ENCODE measurements at regions of chr12 and their contacts with region 1.

Region 1: GRCh38 chr12:127108360-127109215 is 1158.4 kb upstream of the TMEM132C start:
- DNase-seq: peak; percentile 65 to 80 (median 72)
- ATAC-seq: peak; percentile 98
- H3K4me3 ChIP-seq: no peak overlapping the region
- H3K27ac ChIP-seq: no peak overlapping the region
- H3K4me1 ChIP-seq: peaks cover 0 to 4% of the 10 kb centered on the region in 2 experiments; a peak in 3 of 5 replicates
- H3K27me3 ChIP-seq: no peaks in the 10 kb centered on the region
- CTCF ChIP-seq: peak; percentile 73 to 77 (median 76)
- EP300 ChIP-seq: no peak
- POLR2A ChIP-seq: no peak
- RAD21 ChIP-seq: peak; percentile 62 to 83

Region 2: GRCh38 chr12:127025545-127025944 is 83.0 kb before region 1 on chr12:
- CTCF ChIA-PET with region 1: no interaction called
- POLR2A ChIA-PET with region 1: no interaction called
- in situ Hi-C with region 1: no loop called
- intact Hi-C with region 1: loop called (anchors 10 kb)
- DNase-seq: peak in 3 of 4 experiments; percentile 11 to 18 (median 12)
- ATAC-seq: peak; percentile 76
- H3K4me3 ChIP-seq: no peak overlapping the region
- H3K27ac ChIP-seq: no peak overlapping the region
- H3K4me1 ChIP-seq: no peaks in the 10 kb centered on the region; a peak in 1 of 5 replicates
- H3K27me3 ChIP-seq: no peaks in the 10 kb centered on the region
- CTCF ChIP-seq: peak; percentile 26 to 53 (median 28); a peak in 3 of 6 replicates
- EP300 ChIP-seq: no peak
- POLR2A ChIP-seq: no peak
- RAD21 ChIP-seq: peak; percentile 15 to 64; a peak in 3 of 4 replicates

Region 3: DNA sequence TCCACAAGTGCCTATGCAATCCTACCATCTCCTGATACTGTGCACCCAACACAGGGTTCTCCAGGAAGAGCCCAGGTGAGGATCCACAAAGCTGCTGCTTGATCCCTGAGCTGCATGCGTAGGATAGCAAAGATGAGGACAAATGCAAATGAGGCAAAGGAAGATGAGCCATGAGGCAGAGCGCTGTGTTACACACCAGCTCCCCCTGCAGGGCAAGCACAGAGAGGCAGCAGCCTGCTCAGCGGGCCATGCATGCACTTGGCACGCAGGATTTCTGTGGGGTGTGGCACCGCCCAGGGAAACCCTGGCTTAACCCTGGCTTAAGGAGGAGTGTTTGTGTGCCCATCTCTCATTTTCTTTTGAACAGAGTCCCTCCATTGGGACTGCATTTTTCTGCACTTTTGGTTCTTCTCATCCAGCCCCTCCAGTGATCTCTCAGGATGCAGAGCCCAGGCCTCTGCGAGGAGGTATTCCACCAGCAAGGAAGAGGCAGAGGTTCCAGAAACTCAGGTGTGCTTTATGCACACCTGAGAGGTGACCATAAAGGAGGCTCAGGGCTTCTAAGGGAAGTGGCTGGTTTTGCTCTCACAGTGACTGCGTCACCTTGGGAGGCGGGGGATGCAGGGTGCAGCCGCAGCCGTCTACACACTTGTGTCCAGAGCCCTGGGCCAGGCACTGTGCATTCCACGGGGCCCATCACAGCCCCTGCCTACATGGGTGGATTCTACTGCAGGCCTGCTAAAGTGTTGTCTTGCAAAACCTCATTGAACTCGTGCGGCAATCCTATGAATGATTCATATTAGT is 185.1 kb after region 1 on chr12:
- CTCF ChIA-PET with region 1: interaction called, 6 read pairs
- POLR2A ChIA-PET with region 1: no interaction called
- in situ Hi-C with region 1: loop called (anchors 5 kb)
- intact Hi-C with region 1: loop called (anchors 1 kb)
- DNase-seq: peak; percentile 62 to 79 (median 65)
- ATAC-seq: peak; percentile 97
- H3K4me3 ChIP-seq: no peak overlapping the region
- H3K27ac ChIP-seq: no peak overlapping the region
- H3K4me1 ChIP-seq: peaks cover 3 to 12% of the 10 kb centered on the region in 2 experiments; a peak in 3 of 5 replicates
- H3K27me3 ChIP-seq: peaks cover 6 to 13% of the 10 kb centered on the region in 2 experiments; a peak in 3 of 5 replicates
- CTCF ChIP-seq: peak; percentile 90 to 97 (median 91)
- EP300 ChIP-seq: no peak
- POLR2A ChIP-seq: no peak
- RAD21 ChIP-seq: peak; percentile 69 to 91

Region 4: DNA sequence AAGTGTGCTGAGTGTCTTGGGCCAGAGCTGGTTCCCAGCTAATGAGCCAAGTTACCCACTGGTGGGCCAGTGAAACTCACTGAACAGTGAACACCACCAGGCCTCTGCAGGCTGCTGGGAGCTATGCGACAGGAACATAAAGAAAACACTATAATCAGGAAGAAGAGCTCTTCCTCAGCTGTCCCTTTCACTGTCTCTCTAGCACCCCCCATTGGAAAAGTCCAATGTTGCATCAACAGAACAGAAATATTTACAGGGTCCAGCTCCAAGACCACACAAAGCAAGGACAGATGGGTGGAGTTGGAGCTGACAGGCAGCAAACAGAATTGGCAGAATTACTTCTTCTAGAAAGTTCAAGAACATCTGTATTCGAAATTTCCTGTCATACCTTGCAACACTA is 254.8 kb after region 1 on chr12:
- CTCF ChIA-PET with region 1: interaction called, 3 read pairs
- POLR2A ChIA-PET with region 1: no interaction called
- in situ Hi-C with region 1: no loop called
- intact Hi-C with region 1: loop called (anchors 2 kb)
- DNase-seq: peak in 2 of 4 experiments; percentile 20 to 47
- ATAC-seq: peak; percentile 87
- H3K4me3 ChIP-seq: no peak overlapping the region
- H3K27ac ChIP-seq: no peak overlapping the region
- H3K4me1 ChIP-seq: no peaks in the 10 kb centered on the region
- H3K27me3 ChIP-seq: no peaks in the 10 kb centered on the region
- CTCF ChIP-seq: peak; percentile 58 to 70 (median 65)
- EP300 ChIP-seq: no peak
- POLR2A ChIP-seq: no peak
- RAD21 ChIP-seq: peak; percentile 9 to 53; a peak in 2 of 4 replicates

Region 5: DNA sequence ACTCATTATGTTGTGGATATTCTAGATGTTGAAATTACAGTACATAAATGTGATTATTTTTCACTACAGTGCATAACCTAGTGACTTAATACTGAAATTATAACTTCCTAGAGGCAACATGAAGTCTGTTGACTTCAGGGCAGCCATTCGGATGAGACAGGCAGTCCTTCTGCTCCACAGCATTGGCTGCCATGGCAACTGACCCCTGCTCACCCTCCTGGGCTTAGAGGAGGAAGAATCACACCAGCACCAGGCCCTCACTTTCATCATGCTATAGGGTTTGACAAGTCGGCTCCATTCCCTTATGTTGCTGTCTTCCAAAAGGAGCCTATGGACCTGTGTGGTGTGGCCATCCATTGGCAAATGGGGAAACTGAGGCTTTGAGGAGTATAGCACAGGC is 924.9 kb after region 1 on chr12:
- CTCF ChIA-PET with region 1: no interaction called
- POLR2A ChIA-PET with region 1: no interaction called
- in situ Hi-C with region 1: loop called (anchors 10 kb)
- intact Hi-C with region 1: no loop called
- DNase-seq: no peak
- ATAC-seq: no peak
- H3K4me3 ChIP-seq: no peak overlapping the region
- H3K27ac ChIP-seq: no peak overlapping the region
- H3K4me1 ChIP-seq: no peaks in the 10 kb centered on the region
- H3K27me3 ChIP-seq: no peaks in the 10 kb centered on the region
- CTCF ChIP-seq: no peak
- EP300 ChIP-seq: no peak
- POLR2A ChIP-seq: no peak
- RAD21 ChIP-seq: no peak